ENCODE measurements at regions of chr13 and their contacts with region 1.

Region 1: GRCh38 chr13:48492470-48493065 is 40.3 kb downstream of the RCBTB2 start:
- DNase-seq: peak; percentile 87
- H3K4me3 Mint-ChIP-seq: no peak overlapping the region
- H3K27ac Mint-ChIP-seq: no peak overlapping the region
- H3K4me1 Mint-ChIP-seq: peaks cover 69% of the 10 kb centered on the region
- H3K27me3 Mint-ChIP-seq: no peaks in the 10 kb centered on the region

Region 2: DNA sequence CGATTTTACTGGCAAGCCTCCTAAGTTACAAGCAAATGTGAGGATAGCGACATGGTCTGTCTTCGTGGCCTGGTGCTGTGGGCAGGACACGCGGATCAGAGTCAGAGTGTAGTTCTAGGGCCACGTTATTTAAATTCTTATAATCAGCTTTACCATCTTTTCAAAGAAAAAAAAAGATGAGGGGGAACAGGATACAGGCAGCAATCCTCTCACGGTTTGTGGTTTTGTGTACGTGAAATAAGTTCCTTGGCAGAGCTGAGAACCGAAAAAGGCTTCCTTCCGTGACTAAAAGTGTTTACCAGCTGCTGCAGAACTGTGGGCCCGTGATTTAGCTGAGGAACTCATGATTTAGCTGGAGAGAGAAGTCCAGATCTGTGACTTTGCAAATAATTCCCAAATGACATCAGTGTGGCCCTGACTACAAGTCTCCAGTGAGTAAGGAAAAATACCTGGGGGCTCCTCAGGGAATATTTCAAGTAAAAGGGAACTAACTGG is 13.1 kb after region 1 on chr13:
- CTCF ChIA-PET with region 1: interaction called, 14 read pairs
- DNase-seq: peak; percentile 75
- H3K4me3 Mint-ChIP-seq: peak overlapping the region; percentile 54
- H3K27ac Mint-ChIP-seq: peak overlapping the region; percentile 99
- H3K4me1 Mint-ChIP-seq: peaks cover 89% of the 10 kb centered on the region
- H3K27me3 Mint-ChIP-seq: no peaks in the 10 kb centered on the region

Region 3: DNA sequence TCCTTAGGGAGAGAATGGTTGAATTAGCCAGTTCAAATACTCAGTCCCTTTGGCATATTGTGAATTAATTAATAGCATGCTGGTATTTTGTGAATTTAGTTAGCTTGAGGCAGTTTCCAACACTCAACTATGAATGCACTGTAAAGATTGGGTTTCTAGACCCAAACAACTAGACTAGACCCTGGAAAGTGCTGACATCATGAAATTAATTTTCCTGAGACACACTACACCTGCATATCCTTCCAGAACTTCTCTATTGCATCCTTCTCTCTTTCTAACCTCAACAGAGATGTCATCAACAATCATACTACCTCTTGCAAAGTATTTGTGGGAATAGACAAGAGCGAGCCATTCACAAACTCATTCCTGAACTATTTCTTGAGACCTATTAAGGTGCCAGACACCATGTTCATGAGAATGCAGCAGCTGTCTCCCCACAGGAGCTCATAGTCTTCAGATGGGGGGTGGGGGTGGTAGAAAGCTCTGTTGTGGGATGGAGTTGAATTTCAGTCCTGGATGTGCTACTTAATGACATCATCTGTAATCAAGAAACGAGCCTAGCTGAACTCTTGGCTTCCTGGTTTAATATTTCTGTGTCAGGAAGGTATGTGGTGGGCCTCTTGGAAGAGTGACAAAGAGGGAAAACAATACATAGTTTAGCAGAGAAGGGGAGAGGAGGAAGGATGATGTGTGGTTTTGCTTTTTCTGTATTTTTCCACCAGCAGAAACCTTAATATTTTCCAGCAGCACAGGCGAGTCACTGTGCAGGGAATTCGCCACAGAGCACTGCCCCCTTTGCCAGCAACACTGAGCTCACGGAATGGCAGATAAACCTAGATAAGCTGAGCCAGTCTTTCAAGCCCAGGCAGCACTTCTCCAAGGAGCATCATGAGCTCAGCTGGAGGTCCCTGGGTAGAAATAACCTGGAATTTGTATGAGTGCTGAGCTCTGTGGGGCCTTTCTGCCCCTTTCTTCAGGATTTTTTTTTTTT is 108.1 kb after region 1 on chr13:
- CTCF ChIA-PET with region 1: no interaction called
- DNase-seq: no peak
- H3K4me3 Mint-ChIP-seq: no peak overlapping the region
- H3K27ac Mint-ChIP-seq: no peak overlapping the region
- H3K4me1 Mint-ChIP-seq: peaks cover 5% of the 10 kb centered on the region
- H3K27me3 Mint-ChIP-seq: peaks cover 12% of the 10 kb centered on the region

Region 4: DNA sequence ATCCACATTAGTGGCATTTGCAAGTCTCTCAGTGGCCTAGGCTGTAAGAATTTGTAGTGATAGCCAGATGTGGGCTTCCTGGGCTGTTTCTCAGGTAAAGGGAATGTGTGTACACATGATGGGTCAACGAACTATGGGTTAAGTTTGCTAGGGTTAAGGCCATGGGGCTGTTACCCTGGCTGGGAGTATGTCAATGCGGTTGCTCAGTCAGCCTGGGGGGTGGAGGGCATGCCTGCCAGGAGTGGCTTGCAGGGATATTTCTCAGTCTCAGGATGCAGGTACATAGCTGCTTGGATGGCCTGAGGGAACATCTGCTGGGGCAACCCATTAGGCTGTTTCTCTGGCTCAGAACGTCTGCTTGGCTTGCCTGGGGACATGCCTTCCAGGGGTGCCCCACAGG is 174.6 kb after region 1 on chr13:
- CTCF ChIA-PET with region 1: no interaction called
- DNase-seq: no peak
- H3K4me3 Mint-ChIP-seq: no peak overlapping the region
- H3K27ac Mint-ChIP-seq: no peak overlapping the region
- H3K4me1 Mint-ChIP-seq: no peaks in the 10 kb centered on the region
- H3K27me3 Mint-ChIP-seq: no peaks in the 10 kb centered on the region

Measured in activated naive CD4-positive, alpha-beta T cell treated with anti-CD3 and anti-CD28 coated beads, Interleukin-2, amount 10 ng/mL, durations not matched to agents 7 days and 5 days (primary cell).